ENCODE measurements at regions of chr3 and their contacts with region 1.

Region 1: DNA sequence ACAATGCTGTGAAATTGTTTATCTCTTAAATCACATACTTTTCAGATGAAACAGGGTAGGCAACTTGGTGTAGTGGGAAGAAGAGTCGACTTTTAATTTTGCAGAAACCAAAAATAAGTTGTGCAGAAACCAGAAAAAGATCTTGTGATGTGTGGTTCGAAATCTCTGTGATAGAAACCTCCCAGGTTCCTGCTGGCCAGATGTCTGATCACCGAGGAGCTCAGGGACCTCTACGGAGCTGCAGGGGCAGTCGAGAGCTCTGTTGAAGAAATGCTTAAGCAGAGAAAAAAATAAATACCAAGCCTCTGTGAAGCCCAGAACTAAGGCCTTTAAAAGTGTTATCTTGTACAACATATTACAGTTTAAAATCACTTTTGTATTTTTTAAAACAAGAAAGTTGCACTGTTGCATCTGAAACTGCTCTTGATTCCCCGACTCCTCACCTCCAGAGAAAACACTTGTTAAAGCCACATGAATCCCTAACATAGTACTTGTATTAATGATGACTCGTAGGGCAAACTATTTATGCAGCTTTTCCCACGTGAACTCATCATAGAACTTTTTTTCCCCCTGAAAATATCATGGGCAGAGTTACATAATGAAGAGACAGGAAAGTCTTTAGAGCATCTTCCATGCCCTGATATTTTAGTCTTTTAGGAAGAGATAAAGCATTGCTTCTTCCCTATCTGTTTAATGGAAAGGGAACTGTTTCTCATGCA is 51.3 kb downstream of the CCK start:
- DNase-seq: no peak
- H3K4me3 ChIP-seq: no peak overlapping the region
- H3K27ac ChIP-seq: no peak overlapping the region
- H3K4me1 ChIP-seq: no peaks in the 10 kb centered on the region
- H3K27me3 ChIP-seq: no peaks in the 10 kb centered on the region
- CTCF ChIP-seq: no peak
- POLR2A ChIP-seq: no peak

Region 2: DNA sequence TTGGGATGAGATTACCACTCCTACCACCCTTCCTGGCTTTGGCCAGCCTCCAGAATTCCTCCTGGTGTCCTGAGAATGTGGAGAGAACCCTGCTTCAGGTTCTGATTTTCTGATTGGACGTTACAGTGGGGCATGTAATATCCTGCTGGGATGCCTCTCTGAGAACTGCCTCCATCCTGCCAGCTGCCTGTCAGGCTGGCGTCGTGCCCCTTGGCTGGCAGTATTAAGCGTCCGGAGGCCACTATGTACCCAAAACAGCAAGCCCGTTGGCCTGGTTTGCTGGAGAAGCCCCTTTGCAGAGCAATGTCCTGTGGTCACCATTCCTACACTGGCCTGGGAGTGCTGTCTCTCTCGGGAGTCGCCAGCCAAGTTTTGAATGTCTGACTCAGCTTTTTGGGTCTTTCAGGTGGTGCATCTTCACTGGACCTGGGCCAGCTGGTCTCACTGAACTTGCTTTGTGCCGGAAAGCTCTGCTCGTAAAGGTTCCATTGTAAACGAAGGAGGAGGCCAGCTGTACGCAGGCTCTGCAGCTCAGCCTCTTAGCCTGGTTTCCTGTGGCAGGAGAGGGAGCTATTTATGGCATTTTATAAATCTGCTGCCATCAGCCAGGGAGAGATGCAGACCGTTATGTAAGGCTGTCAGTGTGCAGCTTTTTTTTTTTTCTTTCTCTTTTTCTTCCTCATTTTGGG is 142.7 kb before region 1 on chr3:
- intact Hi-C with region 1: no loop called
- DNase-seq: peak; percentile 85 to 94
- H3K4me3 ChIP-seq: peak overlapping the region; percentile 8 to 41 (median 15)
- H3K27ac ChIP-seq: peak overlapping the region; percentile 83
- H3K4me1 ChIP-seq: peaks cover 14 to 18% of the 10 kb centered on the region in 2 donors
- H3K27me3 ChIP-seq: no peaks in the 10 kb centered on the region
- CTCF ChIP-seq: no peak
- POLR2A ChIP-seq: no peak

Region 3: DNA sequence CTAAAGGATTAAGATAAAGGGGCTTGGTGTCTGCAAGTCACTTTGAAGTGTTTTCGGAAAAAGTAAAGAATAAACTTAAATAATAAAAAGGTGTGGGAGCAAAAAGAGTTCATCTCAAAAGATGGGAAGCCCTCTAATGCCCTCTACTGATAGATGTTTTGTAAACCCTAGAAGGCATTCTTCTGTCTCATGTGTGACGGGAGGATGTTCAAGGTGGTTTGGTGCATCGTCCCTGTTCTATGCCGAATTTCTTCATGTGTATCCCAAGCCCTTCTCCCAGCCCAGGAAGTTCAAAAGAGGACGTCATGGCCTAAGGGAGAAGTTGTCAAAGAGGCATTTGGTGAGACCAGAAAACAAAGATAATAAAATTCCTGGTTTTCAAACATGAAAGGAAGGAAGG is 14.1 kb after region 1 on chr3:
- intact Hi-C with region 1: no loop called
- DNase-seq: no peak
- H3K4me3 ChIP-seq: no peak overlapping the region
- H3K27ac ChIP-seq: no peak overlapping the region
- H3K4me1 ChIP-seq: no peaks in the 10 kb centered on the region
- H3K27me3 ChIP-seq: no peaks in the 10 kb centered on the region
- CTCF ChIP-seq: peak in 1 of 3 donors; percentile 14
- POLR2A ChIP-seq: no peak

Region 4: DNA sequence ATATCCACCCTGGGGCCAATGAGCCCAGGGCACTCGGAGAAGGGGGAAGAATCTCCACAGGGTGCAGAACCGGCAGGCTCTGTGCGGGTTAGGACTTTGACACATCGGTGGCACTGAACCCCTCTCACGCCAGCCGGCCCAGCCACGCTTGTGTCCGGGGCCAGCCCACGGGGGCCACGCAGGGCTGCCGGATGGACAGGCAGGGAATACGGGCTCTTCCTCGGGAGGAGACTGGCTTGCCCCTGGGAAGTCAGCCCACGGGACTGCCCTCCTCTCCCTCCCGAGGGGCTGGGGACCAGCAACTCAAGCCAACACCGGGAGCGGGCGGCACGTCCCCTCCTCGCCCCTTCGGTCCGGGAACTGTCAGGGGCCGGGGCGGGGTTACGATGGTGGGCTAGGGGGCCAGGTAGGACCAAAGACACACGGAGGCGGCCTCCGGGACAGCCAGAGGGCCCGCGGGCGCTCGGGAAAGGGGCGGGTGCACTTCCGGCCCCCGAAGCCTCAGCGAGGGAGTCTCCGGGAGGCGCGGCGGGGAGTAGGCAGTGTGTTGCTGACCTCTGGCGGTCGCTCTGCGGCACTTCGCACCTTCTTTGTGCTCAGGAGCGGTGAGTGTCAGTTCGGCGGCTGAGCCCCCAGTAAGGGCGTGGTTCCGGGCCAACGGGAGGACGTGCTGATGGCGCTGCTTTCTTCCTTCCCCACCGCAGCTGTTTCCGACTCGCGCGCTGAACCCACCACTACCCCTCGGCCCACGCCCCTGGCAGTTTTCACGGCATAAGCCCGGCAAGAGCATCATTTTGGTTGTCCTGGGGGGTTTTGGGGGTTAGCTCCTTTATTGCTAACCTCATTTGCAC is 666.1 kb after region 1 on chr3:
- intact Hi-C with region 1: loop called (anchors 10 kb)
- DNase-seq: peak; percentile 69 to 82
- H3K4me3 ChIP-seq: peak overlapping the region; percentile 61 to 79 (median 70)
- H3K27ac ChIP-seq: peak overlapping the region; percentile 72 to 80
- H3K4me1 ChIP-seq: peaks cover 0 to 5% of the 10 kb centered on the region in 2 donors
- H3K27me3 ChIP-seq: no peaks in the 10 kb centered on the region
- CTCF ChIP-seq: peak; percentile 70 to 90 (median 89)
- POLR2A ChIP-seq: no peak

Measured in breast epithelium (tissue), 4 donors.